CD4-positive, alpha-beta T cell (primary cell): ENCODE measurements at regions of chr18 and their contacts with region 1.

Region 1: DNA sequence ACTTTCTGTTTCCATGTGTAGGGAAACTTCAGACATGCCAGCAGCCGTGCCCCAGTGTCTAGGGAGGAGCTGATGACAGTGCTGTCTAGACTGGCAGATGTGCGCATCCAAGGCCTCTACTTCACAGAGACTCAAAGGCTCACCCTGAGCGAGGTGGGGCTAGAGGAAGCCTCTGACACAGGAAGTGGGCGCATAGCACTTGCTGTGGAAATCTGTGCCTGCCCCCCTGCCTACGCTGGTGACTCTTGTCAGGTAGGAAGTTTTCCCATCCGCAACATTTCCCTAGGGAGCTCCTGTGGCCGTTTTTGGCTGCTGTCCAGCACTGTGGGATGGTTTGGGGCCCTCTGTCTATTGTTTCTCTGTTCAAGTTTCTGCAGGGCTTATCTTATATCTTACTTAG is 143.1 kb upstream of the TTC39C start:
- DNase-seq: peak; percentile 54 to 90 (median 72)
- ATAC-seq: peak; percentile 94
- H3K4me3 ChIP-seq: no peak overlapping the region
- H3K4me3 Mint-ChIP-seq: peak overlapping the region; percentile 73
- H3K27ac ChIP-seq: peak overlapping the region in 1 of 2 donors; percentile 9
- H3K27ac Mint-ChIP-seq: peak overlapping the region; percentile 93
- H3K4me1 ChIP-seq: peaks cover 35% of the 10 kb centered on the region
- H3K4me1 Mint-ChIP-seq: peaks cover 55% of the 10 kb centered on the region
- H3K27me3 ChIP-seq: no peaks in the 10 kb centered on the region
- H3K27me3 Mint-ChIP-seq: no peaks in the 10 kb centered on the region
- CTCF ChIP-seq: no peak

Region 2: DNA sequence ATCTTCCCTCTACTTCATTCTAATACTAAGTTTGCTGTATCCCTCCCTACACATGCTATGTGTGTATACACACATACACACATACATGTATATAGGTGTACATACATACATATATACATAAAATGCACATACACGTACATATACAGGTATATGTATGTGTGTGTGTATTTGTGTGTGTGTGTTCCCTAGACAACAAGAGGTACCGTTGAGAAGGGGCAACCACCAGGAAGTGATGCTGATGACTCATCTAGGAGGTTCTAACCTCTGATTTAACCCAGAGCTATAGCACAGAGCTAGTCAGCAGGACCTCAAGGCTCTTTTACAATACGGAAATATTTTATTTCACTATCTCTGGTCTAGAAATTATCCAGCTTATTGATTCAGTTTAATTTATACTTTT is 43.0 kb before region 1 on chr18:
- CTCF ChIA-PET with region 1: interaction called, 3 read pairs
- POLR2A ChIA-PET with region 1: no interaction called
- intact Hi-C with region 1: loop called (anchors 1 to 5 kb)
- DNase-seq: peak in 12 of 14 experiments; percentile 4 to 91 (median 36)
- ATAC-seq: peak; percentile 96
- H3K4me3 ChIP-seq: no peak overlapping the region
- H3K4me3 Mint-ChIP-seq: no peak overlapping the region
- H3K27ac ChIP-seq: peak overlapping the region in 1 of 2 donors; percentile 70
- H3K27ac Mint-ChIP-seq: peak overlapping the region; percentile 25
- H3K4me1 ChIP-seq: peaks cover 15% of the 10 kb centered on the region
- H3K4me1 Mint-ChIP-seq: peaks cover 33% of the 10 kb centered on the region
- H3K27me3 ChIP-seq: no peaks in the 10 kb centered on the region
- H3K27me3 Mint-ChIP-seq: no peaks in the 10 kb centered on the region
- CTCF ChIP-seq: no peak

Region 3: GRCh38 chr18:23833714-23834113 is 37.7 kb before region 1 on chr18:
- CTCF ChIA-PET with region 1: interaction called, 3 read pairs
- POLR2A ChIA-PET with region 1: interaction called, 4 read pairs
- intact Hi-C with region 1: loop called (anchors 1 to 5 kb)
- DNase-seq: no peak
- ATAC-seq: no peak
- H3K4me3 ChIP-seq: no peak overlapping the region
- H3K4me3 Mint-ChIP-seq: no peak overlapping the region
- H3K27ac ChIP-seq: no peak overlapping the region
- H3K27ac Mint-ChIP-seq: no peak overlapping the region
- H3K4me1 ChIP-seq: no peaks in the 10 kb centered on the region
- H3K4me1 Mint-ChIP-seq: peaks cover 5% of the 10 kb centered on the region
- H3K27me3 ChIP-seq: no peaks in the 10 kb centered on the region
- H3K27me3 Mint-ChIP-seq: no peaks in the 10 kb centered on the region
- CTCF ChIP-seq: no peak

Region 4: DNA sequence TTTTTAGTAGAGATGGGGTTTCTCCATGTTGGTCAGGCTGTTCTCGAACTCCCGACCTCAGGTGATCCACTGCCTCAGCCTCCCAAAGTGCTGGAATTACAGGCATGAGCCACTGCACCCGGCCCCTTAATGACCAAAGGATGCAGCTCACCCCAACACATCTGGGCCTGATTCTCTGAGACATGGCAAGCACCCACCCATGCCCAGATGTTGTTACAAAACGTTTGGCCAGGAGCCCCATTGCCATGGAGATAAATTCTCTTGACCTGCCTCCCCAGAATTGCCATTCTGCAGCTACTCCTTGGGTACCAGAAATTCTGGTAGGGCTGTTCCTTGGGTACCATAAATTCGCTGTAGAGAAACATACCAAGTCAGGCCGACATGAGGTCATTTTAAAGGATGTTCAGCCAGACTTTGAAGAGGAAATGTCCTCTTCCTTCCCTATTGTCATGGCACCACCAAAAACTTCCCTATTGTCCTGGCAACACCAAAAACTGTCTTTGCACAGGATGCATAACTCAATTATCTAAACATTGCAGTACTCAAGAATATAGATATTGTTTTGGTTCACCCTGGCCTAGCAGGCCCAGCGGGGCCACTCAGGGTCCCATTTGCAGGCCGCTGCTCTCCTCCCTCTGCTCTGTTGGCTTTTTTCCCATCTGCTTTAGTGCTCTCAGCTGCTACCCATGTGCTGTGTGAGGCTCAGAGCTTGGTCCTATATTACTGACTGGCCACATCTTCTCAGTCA is 17.8 kb before region 1 on chr18:
- CTCF ChIA-PET with region 1: no interaction called
- POLR2A ChIA-PET with region 1: no interaction called
- intact Hi-C with region 1: no loop called
- DNase-seq: no peak
- ATAC-seq: no peak
- H3K4me3 ChIP-seq: no peak overlapping the region
- H3K4me3 Mint-ChIP-seq: no peak overlapping the region
- H3K27ac ChIP-seq: no peak overlapping the region
- H3K27ac Mint-ChIP-seq: no peak overlapping the region
- H3K4me1 ChIP-seq: no peaks in the 10 kb centered on the region
- H3K4me1 Mint-ChIP-seq: peaks cover 21% of the 10 kb centered on the region
- H3K27me3 ChIP-seq: no peaks in the 10 kb centered on the region
- H3K27me3 Mint-ChIP-seq: no peaks in the 10 kb centered on the region
- CTCF ChIP-seq: no peak

Region 5: GRCh38 chr18:23900994-23901393 is 29.6 kb after region 1 on chr18:
- CTCF ChIA-PET with region 1: no interaction called
- POLR2A ChIA-PET with region 1: no interaction called
- intact Hi-C with region 1: no loop called
- DNase-seq: no peak
- ATAC-seq: no peak
- H3K4me3 ChIP-seq: no peak overlapping the region
- H3K4me3 Mint-ChIP-seq: no peak overlapping the region
- H3K27ac ChIP-seq: no peak overlapping the region
- H3K27ac Mint-ChIP-seq: no peak overlapping the region
- H3K4me1 ChIP-seq: no peaks in the 10 kb centered on the region
- H3K4me1 Mint-ChIP-seq: peaks cover 6% of the 10 kb centered on the region
- H3K27me3 ChIP-seq: no peaks in the 10 kb centered on the region
- H3K27me3 Mint-ChIP-seq: no peaks in the 10 kb centered on the region
- CTCF ChIP-seq: no peak

Region 6: GRCh38 chr18:24651434-24651833 is 780.0 kb after region 1 on chr18:
- CTCF ChIA-PET with region 1: no interaction called
- POLR2A ChIA-PET with region 1: no interaction called
- intact Hi-C with region 1: no loop called
- DNase-seq: no peak
- ATAC-seq: no peak
- H3K4me3 ChIP-seq: no peak overlapping the region
- H3K4me3 Mint-ChIP-seq: no peak overlapping the region
- H3K27ac ChIP-seq: no peak overlapping the region
- H3K27ac Mint-ChIP-seq: no peak overlapping the region
- H3K4me1 ChIP-seq: no peaks in the 10 kb centered on the region
- H3K4me1 Mint-ChIP-seq: no peaks in the 10 kb centered on the region
- H3K27me3 ChIP-seq: no peaks in the 10 kb centered on the region
- H3K27me3 Mint-ChIP-seq: no peaks in the 10 kb centered on the region
- CTCF ChIP-seq: no peak